CD4-positive, alpha-beta memory T cell (primary cell): ENCODE measurements at regions of chr20 and their contacts with region 1.

Region 1: GRCh38 chr20:41232973-41233926 is 84.3 kb downstream of the ZHX3 start:
- DNase-seq: no peak
- H3K4me3 ChIP-seq: no peak overlapping the region
- H3K4me3 Mint-ChIP-seq: peak overlapping the region in 1 of 8 donors; percentile 70
- H3K27ac ChIP-seq: no peak overlapping the region
- H3K27ac Mint-ChIP-seq: peak overlapping the region in 2 of 7 donors; percentile 35 to 54
- H3K4me1 ChIP-seq: peaks cover 7% of the 10 kb centered on the region
- H3K4me1 Mint-ChIP-seq: peaks cover 8 to 24% (median 14%) of the 10 kb centered on the region in 4 donors
- H3K27me3 ChIP-seq: no peaks in the 10 kb centered on the region
- H3K27me3 Mint-ChIP-seq: no peaks in the 10 kb centered on the region

Region 2: DNA sequence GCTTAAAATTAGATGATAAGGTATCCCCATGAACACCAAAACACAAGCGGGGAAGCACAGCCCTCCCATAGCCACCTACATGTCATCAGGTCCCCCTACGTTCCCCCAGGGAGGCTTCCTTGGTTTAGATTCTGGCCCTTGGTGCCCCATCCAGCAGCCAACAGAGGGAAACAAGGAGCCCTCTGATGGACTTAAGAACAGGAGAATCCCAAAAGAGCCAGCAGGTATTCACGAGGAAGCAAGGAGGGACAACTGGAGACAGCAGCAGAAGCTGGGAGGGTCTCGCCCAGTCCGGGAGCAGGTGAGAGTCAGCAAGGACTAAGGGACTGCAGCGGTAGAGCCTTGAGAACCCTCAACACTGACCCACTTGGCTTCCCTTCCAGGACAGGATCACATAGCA is 263.0 kb before region 1 on chr20:
- CTCF ChIA-PET with region 1: interaction called, 7 read pairs
- POLR2A ChIA-PET with region 1: no interaction called
- intact Hi-C with region 1: loop called (anchors 1 kb)
- DNase-seq: no peak
- H3K4me3 ChIP-seq: no peak overlapping the region
- H3K4me3 Mint-ChIP-seq: peak overlapping the region in 1 of 8 donors; percentile 5
- H3K27ac ChIP-seq: no peak overlapping the region
- H3K27ac Mint-ChIP-seq: peak overlapping the region in 1 of 7 donors; percentile 41
- H3K4me1 ChIP-seq: no peaks in the 10 kb centered on the region
- H3K4me1 Mint-ChIP-seq: peaks cover 6 to 10% (median 8%) of the 10 kb centered on the region in 4 donors
- H3K27me3 ChIP-seq: no peaks in the 10 kb centered on the region
- H3K27me3 Mint-ChIP-seq: no peaks in the 10 kb centered on the region

Region 3: DNA sequence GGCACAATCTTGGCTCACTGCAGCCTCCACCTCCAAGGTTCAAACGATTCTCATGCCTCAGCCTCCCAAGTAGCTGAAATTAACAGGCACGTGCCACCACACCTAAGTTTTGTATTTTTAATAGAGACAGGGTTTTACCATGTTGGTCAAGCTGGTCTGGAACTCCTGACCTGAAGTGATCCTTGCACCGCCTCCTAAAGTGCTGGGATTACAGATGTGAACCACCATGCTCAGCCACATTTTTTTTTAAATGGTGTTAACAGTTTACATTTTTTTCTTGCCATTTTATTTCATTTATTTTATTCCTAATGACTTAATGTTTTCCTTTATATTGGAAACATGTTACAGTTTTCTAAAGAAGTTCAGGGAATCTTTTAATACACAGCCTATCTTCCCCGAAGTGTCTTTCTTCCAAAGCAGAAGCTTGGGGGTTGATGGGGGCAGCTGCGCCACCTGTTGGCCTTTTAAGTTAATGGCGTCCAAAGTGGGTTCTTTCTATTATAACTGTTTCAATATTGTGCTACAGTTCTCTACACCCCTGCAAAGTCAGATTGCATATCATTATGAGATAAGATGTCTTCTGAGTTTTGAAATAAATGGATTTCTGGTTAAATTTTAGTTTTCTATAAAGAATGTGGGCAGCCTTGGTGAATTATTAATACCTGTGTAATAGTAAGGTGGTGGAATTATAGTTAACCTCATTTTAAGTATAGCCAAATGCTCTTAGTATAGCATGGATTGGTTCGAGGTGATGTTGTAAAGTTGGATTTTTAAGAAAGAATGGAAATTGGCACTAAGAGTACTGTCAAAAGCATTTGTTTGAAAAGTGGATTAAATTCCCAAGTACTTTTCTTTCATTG is 137.9 kb before region 1 on chr20:
- CTCF ChIA-PET with region 1: interaction called, 4 read pairs
- POLR2A ChIA-PET with region 1: no interaction called
- intact Hi-C with region 1: loop called (anchors 1 kb)
- DNase-seq: peak in 4 of 5 donors; percentile 51 to 61 (median 54)
- H3K4me3 ChIP-seq: no peak overlapping the region
- H3K4me3 Mint-ChIP-seq: no peak overlapping the region
- H3K27ac ChIP-seq: no peak overlapping the region
- H3K27ac Mint-ChIP-seq: peak overlapping the region in 2 of 7 donors; percentile 46 to 72
- H3K4me1 ChIP-seq: no peaks in the 10 kb centered on the region
- H3K4me1 Mint-ChIP-seq: peaks cover 0 to 6% (median 0%) of the 10 kb centered on the region in 4 donors
- H3K27me3 ChIP-seq: no peaks in the 10 kb centered on the region
- H3K27me3 Mint-ChIP-seq: no peaks in the 10 kb centered on the region

Region 4: DNA sequence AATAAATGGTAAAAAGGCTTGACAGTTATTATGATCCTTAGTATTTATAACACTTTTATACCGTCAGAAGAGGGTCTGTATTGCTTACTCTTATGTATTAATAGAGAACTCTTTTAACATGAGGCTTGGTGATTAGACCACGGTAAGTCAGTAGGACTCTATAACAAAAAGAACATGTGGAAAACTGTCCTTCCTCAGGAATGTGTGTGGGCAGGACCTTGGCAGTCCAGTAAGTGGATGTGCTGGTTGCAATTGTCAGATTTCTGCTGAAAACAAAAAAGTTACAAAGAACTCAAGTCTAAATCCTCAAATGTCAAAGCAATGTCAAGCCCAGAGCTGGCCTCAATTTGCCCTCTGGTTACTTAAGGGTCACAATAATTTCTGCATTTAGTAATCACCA is 14.8 kb before region 1 on chr20:
- CTCF ChIA-PET with region 1: interaction called, 20 read pairs
- POLR2A ChIA-PET with region 1: no interaction called
- intact Hi-C with region 1: no loop called
- DNase-seq: no peak
- H3K4me3 ChIP-seq: no peak overlapping the region
- H3K4me3 Mint-ChIP-seq: no peak overlapping the region
- H3K27ac ChIP-seq: no peak overlapping the region
- H3K27ac Mint-ChIP-seq: no peak overlapping the region
- H3K4me1 ChIP-seq: no peaks in the 10 kb centered on the region
- H3K4me1 Mint-ChIP-seq: no peaks in the 10 kb centered on the region
- H3K27me3 ChIP-seq: no peaks in the 10 kb centered on the region
- H3K27me3 Mint-ChIP-seq: no peaks in the 10 kb centered on the region

Region 5: GRCh38 chr20:41249406-41250281 is 16.4 kb after region 1 on chr20:
- CTCF ChIA-PET with region 1: no interaction called
- POLR2A ChIA-PET with region 1: no interaction called
- intact Hi-C with region 1: no loop called
- DNase-seq: no peak
- H3K4me3 ChIP-seq: no peak overlapping the region
- H3K4me3 Mint-ChIP-seq: no peak overlapping the region
- H3K27ac ChIP-seq: no peak overlapping the region
- H3K27ac Mint-ChIP-seq: no peak overlapping the region
- H3K4me1 ChIP-seq: no peaks in the 10 kb centered on the region
- H3K4me1 Mint-ChIP-seq: peaks cover 0 to 3% (median 0%) of the 10 kb centered on the region in 4 donors
- H3K27me3 ChIP-seq: no peaks in the 10 kb centered on the region
- H3K27me3 Mint-ChIP-seq: no peaks in the 10 kb centered on the region

Region 6: GRCh38 chr20:41339507-41340326 is 106.5 kb after region 1 on chr20:
- CTCF ChIA-PET with region 1: interaction called, 23 read pairs
- POLR2A ChIA-PET with region 1: no interaction called
- intact Hi-C with region 1: loop called (anchors 1 kb)
- DNase-seq: peak; percentile 76 to 86 (median 81)
- H3K4me3 ChIP-seq: peak overlapping the region in 1 of 2 donors; percentile 24
- H3K4me3 Mint-ChIP-seq: peak overlapping the region; percentile 60 to 85 (median 78)
- H3K27ac ChIP-seq: no peak overlapping the region
- H3K27ac Mint-ChIP-seq: peak overlapping the region in 4 of 7 donors; percentile 18 to 62 (median 53)
- H3K4me1 ChIP-seq: peaks cover 10% of the 10 kb centered on the region
- H3K4me1 Mint-ChIP-seq: peaks cover 5 to 13% (median 8%) of the 10 kb centered on the region in 4 donors
- H3K27me3 ChIP-seq: no peaks in the 10 kb centered on the region
- H3K27me3 Mint-ChIP-seq: peaks cover 1 to 7% of the 10 kb centered on the region in 2 donors